H1 (cell line): ENCODE measurements at regions of chr16 and their contacts with region 1.

Region 1: DNA sequence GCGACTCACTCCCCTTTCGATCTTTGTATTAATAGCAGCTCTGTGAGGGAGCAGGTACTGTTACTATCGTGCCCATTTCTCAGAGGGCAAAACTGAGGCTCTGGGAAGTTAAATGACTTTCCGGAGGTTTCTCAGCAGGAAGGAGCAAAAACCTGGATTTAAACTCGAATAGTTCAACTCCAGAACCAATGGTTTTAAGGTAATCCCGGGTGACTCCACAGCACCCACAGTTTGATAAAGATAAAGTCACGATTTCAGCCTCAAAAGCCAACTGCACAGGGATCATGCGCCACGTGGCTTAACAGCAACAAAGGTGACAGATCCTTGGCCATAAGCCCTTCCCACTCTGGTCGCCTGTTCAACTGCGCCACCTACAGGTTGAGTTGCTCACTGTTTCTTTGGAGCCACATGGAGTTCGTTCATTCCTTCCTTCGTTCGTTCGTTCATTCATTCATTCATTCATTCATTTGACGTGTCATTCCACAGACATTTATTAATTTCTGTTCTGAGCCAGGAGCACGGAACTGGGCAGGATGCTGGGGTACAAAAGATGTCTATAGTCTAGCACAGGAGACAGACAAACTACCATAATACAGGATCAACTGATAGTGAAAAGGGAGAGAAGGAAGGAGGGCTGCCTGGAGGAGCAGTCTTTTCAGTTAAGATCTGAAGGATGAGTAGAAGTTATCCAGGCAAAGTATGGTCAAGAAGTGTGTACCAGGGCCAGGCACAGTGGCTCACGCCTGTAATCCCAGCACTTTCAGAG is 134.8 kb downstream of the HS3ST2 start:
- DNase-seq: peak; percentile 56 to 92
- H3K4me3 ChIP-seq: no peak overlapping the region
- H3K27ac ChIP-seq: no peak overlapping the region
- H3K4me1 ChIP-seq: peaks cover 0 to 8% (median 3%) of the 10 kb centered on the region in 4 experiments; a peak in 3 of 7 replicates
- H3K27me3 ChIP-seq: peaks cover 0 to 9% (median 3%) of the 10 kb centered on the region in 4 experiments; a peak in 4 of 7 replicates
- CTCF ChIP-seq: peak; percentile 73 to 99 (median 88)
- EP300 ChIP-seq: no peak
- POLR2A ChIP-seq: no peak
- RAD21 ChIP-seq: peak; percentile 82 to 84

Region 2: DNA sequence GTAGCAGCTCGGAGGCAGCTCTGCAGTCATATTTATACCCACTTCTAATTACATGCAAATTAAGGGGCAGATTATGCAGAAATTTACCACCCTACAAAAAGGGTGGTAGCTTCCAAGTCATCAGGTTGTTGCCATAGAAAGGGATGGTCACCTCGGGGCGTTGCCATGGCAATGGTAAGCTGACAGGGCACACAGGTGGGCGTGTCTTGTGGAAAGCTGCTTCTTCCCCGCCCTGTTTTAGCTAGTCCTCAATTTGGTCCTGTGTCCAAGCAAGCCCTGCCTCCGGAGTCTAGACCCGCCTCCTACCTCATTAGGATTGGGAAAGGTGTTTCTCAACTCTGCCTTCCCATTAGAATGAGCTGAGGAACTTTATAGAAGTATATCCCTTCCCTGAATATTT is 36.1 kb before region 1 on chr16:
- CTCF ChIA-PET with region 1: interaction called, 10 read pairs
- POLR2A ChIA-PET with region 1: no interaction called
- DNase-seq: peak in 1 of 2 experiments; percentile 58
- H3K4me3 ChIP-seq: no peak overlapping the region
- H3K27ac ChIP-seq: no peak overlapping the region
- H3K4me1 ChIP-seq: no peaks in the 10 kb centered on the region
- H3K27me3 ChIP-seq: no peaks in the 10 kb centered on the region
- CTCF ChIP-seq: no peak
- EP300 ChIP-seq: no peak
- POLR2A ChIP-seq: no peak
- RAD21 ChIP-seq: no peak

Region 3: DNA sequence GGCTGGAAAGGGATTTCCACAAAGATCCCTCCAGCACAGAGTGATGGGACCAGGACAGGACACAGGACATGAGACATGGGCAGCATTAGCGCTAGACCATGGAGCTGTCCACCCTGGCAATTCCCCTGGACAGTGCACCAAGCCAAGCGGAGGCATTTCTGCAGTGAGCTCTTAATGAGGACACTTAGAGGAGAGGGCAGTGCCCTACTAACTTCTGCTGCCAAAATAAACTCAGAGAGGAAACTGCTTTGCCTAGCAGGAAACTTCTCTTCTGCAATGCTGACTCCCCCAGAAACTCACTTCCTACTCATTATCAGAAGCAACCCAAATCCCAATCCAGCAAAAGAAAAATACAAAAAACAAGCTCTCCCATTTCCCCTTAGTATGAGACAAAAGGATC is 15.6 kb before region 1 on chr16:
- CTCF ChIA-PET with region 1: interaction called, 15 read pairs
- POLR2A ChIA-PET with region 1: no interaction called
- DNase-seq: no peak
- H3K4me3 ChIP-seq: no peak overlapping the region
- H3K27ac ChIP-seq: no peak overlapping the region
- H3K4me1 ChIP-seq: peaks cover 3 to 13% (median 5%) of the 10 kb centered on the region in 4 experiments; a peak in 5 of 7 replicates
- H3K27me3 ChIP-seq: no peaks in the 10 kb centered on the region; a peak in 1 of 7 replicates
- CTCF ChIP-seq: no peak
- EP300 ChIP-seq: no peak
- POLR2A ChIP-seq: no peak
- RAD21 ChIP-seq: no peak